OCI-LY7 (cell line): ENCODE measurements at regions of chr1 and their contacts with region 1.

Region 1: DNA sequence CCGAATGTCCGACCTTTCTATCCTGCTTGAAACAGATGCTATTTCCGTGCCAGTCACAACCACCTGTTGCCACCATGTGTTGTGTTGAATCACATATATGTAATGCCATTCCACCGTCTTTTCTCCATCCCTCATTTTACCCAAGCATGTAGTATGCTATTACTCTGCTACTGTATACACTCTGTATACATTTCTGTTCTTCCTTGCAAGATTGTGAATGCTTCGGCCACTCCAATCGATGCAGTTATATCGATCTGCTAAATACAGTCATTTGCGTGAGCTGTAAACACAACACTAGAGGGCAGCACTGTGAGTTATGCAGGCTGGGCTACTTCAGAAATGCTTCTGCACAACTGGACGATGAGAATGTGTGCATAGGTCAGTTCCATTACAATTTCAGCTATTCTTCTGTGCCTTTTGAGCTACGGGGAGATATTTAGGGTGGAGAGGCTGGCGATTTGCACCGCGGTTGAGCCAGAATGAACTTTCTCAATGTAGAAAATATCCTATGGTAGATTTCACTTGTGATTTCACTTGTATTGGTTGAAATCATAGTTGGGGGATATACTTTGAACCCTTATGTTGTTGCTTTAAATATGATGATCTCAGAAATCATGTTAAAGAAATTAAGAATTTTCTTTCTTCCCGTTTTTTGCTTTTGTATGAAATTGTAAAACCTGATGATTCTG is 289.8 kb downstream of the NTNG1 start:
- DNase-seq: peak; percentile 70
- H3K4me3 ChIP-seq: no peak overlapping the region
- H3K27ac ChIP-seq: no peak overlapping the region
- H3K4me1 ChIP-seq: peaks cover 39% of the 10 kb centered on the region
- CTCF ChIP-seq: peak; percentile 92

Region 2: DNA sequence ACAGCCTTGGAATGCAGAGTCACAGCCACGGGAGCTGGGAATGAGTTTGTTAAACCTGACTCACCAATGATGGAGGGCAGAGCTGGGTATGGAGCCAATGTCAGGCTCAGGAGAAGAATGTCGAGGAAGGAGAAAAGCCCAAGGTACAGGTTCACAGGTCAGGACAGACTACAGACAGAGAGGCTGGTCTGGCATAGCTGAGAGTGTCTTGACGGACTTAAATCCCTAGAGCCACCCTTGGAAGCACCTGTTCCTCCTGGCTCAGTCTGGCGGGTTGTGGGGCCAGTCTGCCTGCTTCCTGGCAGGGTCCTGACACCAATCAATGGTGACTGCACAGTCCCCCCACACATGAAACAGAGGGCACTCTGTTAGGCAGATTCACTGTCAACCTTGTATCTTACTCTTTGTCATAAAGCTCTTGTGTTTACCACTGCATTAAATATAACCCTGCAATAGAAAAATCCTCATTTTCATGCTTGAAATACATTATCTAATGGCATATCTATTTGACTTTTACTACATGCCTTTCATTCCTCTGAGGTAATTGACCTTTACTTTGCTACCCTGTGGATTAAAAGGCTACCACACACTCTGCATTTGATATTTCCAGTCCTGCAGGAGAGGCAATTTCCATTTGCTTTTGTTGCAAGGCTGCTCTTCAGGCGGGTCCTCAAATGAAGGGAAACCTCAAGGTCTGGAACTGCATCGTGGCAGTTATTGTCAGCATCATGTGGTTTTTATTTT is 52.0 kb before region 1 on chr1:
- CTCF ChIA-PET with region 1: no interaction called
- POLR2A ChIA-PET with region 1: interaction called, 7 read pairs
- intact Hi-C with region 1: loop called (anchors 5 kb)
- DNase-seq: no peak
- H3K4me3 ChIP-seq: no peak overlapping the region
- H3K27ac ChIP-seq: no peak overlapping the region
- H3K4me1 ChIP-seq: peaks cover 9% of the 10 kb centered on the region
- CTCF ChIP-seq: no peak

Region 3: GRCh38 chr1:107450899-107451664 is 20.4 kb after region 1 on chr1:
- CTCF ChIA-PET with region 1: no interaction called
- POLR2A ChIA-PET with region 1: interaction called, 5 read pairs
- intact Hi-C with region 1: loop called (anchors 1 kb)
- DNase-seq: peak; percentile 39
- H3K4me3 ChIP-seq: peak overlapping the region; percentile 12
- H3K27ac ChIP-seq: peak overlapping the region; percentile 27
- H3K4me1 ChIP-seq: peaks cover 28% of the 10 kb centered on the region
- CTCF ChIP-seq: no peak

Region 4: DNA sequence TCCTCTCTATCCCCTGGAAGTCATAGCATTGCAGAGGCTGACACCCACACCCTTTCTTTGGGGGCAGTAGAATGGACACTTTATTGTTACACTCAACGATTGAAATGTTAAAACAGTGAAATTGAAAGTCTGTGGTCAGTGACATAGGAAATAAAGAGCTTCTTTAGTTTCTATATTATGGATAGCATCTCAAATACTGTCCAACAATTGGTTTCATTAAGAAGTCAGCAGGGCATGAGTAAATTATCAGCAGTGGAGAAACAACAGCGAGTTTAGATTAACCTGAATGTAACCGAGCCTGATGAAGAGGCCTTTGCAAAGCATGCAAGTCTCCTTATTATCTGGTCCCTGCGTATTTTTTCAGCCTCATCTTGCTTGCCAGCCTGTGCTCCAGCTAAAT is 60.9 kb after region 1 on chr1:
- CTCF ChIA-PET with region 1: no interaction called
- POLR2A ChIA-PET with region 1: no interaction called
- intact Hi-C with region 1: no loop called
- DNase-seq: no peak
- H3K4me3 ChIP-seq: no peak overlapping the region
- H3K27ac ChIP-seq: no peak overlapping the region
- H3K4me1 ChIP-seq: peaks cover 8% of the 10 kb centered on the region
- CTCF ChIP-seq: no peak

Region 5: GRCh38 chr1:107529502-107530149 is 98.9 kb after region 1 on chr1:
- CTCF ChIA-PET with region 1: no interaction called
- POLR2A ChIA-PET with region 1: no interaction called
- intact Hi-C with region 1: loop called (anchors 2 kb)
- DNase-seq: peak; percentile 74
- H3K4me3 ChIP-seq: no peak overlapping the region
- H3K27ac ChIP-seq: no peak overlapping the region
- H3K4me1 ChIP-seq: peaks cover 4% of the 10 kb centered on the region
- CTCF ChIP-seq: peak; percentile 97

Region 6: GRCh38 chr1:107750358-107750959 is 319.8 kb after region 1 on chr1:
- CTCF ChIA-PET with region 1: no interaction called
- POLR2A ChIA-PET with region 1: no interaction called
- intact Hi-C with region 1: loop called (anchors 5 kb)
- DNase-seq: peak; percentile 78
- H3K4me3 ChIP-seq: no peak overlapping the region
- H3K27ac ChIP-seq: no peak overlapping the region
- H3K4me1 ChIP-seq: peaks cover 7% of the 10 kb centered on the region
- CTCF ChIP-seq: peak; percentile 94